Right cardiac atrium (tissue), 5 donors: ENCODE measurements at regions of chr11 and their contacts with region 1.

Region 1: DNA sequence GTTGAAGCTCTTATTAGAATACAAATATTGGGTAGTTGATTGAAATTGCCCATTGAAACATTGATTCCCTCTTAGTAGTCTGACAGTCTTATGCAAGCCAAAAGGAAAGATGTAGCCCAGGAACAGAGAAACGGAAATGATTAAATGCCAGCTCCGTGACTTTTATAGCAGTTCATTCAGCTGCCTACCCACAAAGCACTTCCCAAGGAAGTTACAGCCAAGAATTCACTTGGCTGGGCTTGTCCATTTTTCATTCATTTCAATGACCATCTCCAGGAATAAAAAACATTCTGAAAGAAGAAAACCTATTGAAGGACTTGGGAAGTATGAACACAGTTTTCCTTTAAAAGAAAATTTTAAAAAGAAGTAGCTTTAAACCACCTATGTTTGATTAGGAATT is 62.0 kb downstream of the NCAM1 start:
- DNase-seq: no peak
- ATAC-seq: peak in 1 of 2 donors; percentile 14
- H3K4me3 ChIP-seq: no peak overlapping the region
- H3K27ac ChIP-seq: no peak overlapping the region
- H3K4me1 ChIP-seq: no peaks in the 10 kb centered on the region
- H3K27me3 ChIP-seq: no peaks in the 10 kb centered on the region

Region 2: DNA sequence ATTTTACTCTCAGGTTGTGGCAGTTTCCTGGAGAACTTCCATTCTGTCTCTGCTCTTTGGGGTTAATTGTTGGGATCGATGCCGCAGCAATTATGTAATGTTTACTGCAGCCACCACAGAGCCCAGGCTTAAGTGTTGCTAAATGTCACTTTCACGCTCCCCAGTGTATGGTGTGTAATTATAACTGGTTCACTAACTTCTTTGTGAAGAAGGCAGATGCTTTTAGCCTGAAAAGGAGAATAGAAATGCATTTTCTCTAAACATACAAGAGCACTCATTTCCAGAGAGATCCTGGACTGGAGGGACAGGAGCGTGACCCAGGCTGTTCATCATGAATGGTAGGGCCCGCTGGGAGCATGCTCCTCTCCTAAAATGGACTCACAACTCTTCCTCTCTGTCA is 630.3 kb before region 1 on chr11:
- intact Hi-C with region 1: loop called in 1 of 4 experiments (anchors 10 kb)
- DNase-seq: no peak
- ATAC-seq: no peak
- H3K4me3 ChIP-seq: no peak overlapping the region
- H3K27ac ChIP-seq: no peak overlapping the region
- H3K4me1 ChIP-seq: no peaks in the 10 kb centered on the region
- H3K27me3 ChIP-seq: no peaks in the 10 kb centered on the region

Region 3: DNA sequence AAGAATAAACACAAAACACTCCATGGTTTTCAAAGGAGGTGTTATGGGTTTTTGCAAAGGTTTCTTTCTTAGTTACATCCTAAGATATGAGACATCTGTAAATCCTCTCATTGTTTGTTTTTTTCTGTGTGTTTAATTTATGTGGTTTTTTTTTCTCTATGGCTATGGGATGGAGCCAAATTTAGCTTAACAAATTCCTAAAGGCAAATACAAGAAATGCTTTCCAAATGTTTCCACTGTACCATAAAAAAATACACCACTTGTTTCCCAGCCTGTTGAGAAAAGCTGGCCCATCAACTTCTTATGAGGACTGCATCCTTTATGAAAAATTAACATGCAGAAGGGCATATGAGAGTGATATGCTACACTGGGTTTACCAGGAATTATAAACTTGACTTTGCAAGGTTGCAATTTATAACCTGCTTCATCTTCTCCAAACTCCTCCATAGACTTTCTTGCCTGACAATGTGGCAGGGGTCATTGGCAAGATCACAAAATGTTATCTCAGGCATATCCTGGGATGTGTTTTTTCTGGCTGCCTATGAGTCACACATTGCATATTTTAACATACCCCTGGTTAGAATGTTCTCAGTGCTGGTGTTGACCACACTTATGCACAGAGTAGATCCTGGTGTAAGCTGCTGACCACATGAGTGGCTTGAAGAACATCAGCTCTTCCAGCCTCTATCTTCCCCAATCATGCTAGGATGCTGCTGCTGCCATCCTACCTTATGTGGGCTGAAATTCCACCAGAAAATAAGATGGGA is 153.6 kb after region 1 on chr11:
- intact Hi-C with region 1: no loop called
- DNase-seq: no peak
- ATAC-seq: peak in 1 of 2 donors; percentile 22
- H3K4me3 ChIP-seq: no peak overlapping the region
- H3K27ac ChIP-seq: no peak overlapping the region
- H3K4me1 ChIP-seq: peaks cover 2% of the 10 kb centered on the region
- H3K27me3 ChIP-seq: no peaks in the 10 kb centered on the region